ENCODE measurements at regions of chrX and their contacts with region 1.

Region 1: GRCh38 chrX:154490414-154491083 is at the start of gene SLC10A3:
- DNase-seq: peak; percentile 92
- H3K4me3 Mint-ChIP-seq: peak within 1 kb of the TSS; percentile 86
- H3K27ac Mint-ChIP-seq: peak within 1 kb of the TSS; percentile 88
- H3K4me1 Mint-ChIP-seq: peaks cover 20% of the 10 kb centered on the region
- H3K27me3 Mint-ChIP-seq: no peaks in the 10 kb centered on the region
- total RNA-seq, gene SLC10A3: 6.7 to 6.9 TPM

Region 2: DNA sequence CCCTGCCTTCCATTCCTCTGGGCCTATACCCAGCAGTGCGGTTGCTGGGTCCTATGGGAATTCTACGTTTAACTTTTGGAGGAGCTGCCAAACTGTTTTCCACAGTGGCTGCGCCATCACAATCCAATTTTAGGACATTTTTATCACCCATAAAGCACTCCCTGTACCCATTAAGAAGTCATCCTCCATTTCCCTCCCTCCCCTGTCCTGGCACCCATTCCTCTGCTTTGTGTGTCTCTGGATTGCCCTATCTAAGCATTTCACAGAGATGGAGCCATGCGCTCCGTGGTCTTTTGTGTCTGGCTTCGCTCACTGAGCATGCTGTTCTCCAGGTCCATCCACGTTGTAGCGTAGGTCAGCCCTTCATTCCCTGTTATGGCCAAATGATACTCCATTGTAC is 348.2 kb before region 1 on chrX:
- CTCF ChIA-PET with region 1: no interaction called
- intact Hi-C with region 1: no loop called
- DNase-seq: no peak
- H3K4me3 Mint-ChIP-seq: no peak overlapping the region
- H3K27ac Mint-ChIP-seq: no peak overlapping the region
- H3K4me1 Mint-ChIP-seq: no peaks in the 10 kb centered on the region
- H3K27me3 Mint-ChIP-seq: no peaks in the 10 kb centered on the region

Region 3: GRCh38 chrX:154317391-154317995 is 173.1 kb before region 1 on chrX:
- CTCF ChIA-PET with region 1: no interaction called
- intact Hi-C with region 1: no loop called
- DNase-seq: no peak
- H3K4me3 Mint-ChIP-seq: no peak overlapping the region
- H3K27ac Mint-ChIP-seq: no peak overlapping the region
- H3K4me1 Mint-ChIP-seq: peaks cover 48% of the 10 kb centered on the region
- H3K27me3 Mint-ChIP-seq: no peaks in the 10 kb centered on the region

Region 4: DNA sequence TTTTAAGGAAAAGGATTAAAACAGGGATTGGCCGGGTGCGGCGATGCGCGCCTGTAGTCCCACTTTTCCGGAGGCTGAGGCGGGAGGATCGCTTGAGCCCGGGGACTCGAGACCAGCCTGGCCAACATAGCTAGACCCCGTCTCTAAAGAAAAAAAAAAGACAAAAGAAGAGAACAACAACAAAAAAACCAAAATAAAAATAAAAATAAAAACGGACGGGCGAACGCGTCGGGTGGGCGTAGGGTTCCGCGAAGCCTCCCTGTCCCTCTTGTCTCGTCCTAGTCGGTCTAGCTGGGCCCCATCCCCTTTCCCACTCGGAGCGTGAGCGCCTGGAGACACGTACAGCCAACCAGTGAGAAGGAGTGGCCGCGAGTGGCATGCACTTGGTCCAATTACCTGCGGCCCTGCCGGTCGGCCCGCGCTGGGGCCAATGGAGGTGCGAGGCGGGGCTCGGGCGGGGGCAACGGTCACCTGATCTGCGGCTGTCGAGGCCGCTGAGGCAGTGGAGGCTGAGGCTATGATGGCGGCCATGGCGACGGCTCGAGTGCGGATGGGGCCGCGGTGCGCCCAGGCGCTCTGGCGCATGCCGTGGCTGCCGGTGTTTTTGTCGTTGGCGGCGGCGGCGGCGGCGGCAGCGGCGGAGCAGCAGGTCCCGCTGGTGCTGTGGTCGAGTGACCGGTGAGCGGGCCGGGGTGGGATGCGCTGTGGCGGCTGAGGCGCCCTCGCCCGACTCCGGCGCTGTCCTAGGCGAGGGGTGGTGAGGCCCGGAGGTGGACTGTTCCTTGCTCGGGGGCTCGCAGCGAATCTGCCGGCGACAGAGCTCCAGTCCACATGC is 62.2 kb before region 1 on chrX and contains the start of gene ATP6AP1:
- CTCF ChIA-PET with region 1: no interaction called
- intact Hi-C with region 1: loop called (anchors 1 kb)
- DNase-seq: peak; percentile 94
- H3K4me3 Mint-ChIP-seq: peak within 1 kb of the TSS; percentile 74
- H3K27ac Mint-ChIP-seq: peak within 1 kb of the TSS; percentile 63
- H3K4me1 Mint-ChIP-seq: peaks cover 24% of the 10 kb centered on the region
- H3K27me3 Mint-ChIP-seq: no peaks in the 10 kb centered on the region
- total RNA-seq, gene ATP6AP1: 20.3 to 21.1 TPM

Region 5: GRCh38 chrX:154436983-154437719 is 53.4 kb before region 1 on chrX and contains the start of gene GDI1:
- CTCF ChIA-PET with region 1: no interaction called
- intact Hi-C with region 1: loop called (anchors 2 kb)
- DNase-seq: peak; percentile 45
- H3K4me3 Mint-ChIP-seq: peak within 1 kb of the TSS; percentile 84
- H3K27ac Mint-ChIP-seq: peak within 1 kb of the TSS; percentile 82
- H3K4me1 Mint-ChIP-seq: peaks cover 22% of the 10 kb centered on the region
- H3K27me3 Mint-ChIP-seq: no peaks in the 10 kb centered on the region
- total RNA-seq, gene GDI1: 93.6 to 96.9 TPM

Region 6: DNA sequence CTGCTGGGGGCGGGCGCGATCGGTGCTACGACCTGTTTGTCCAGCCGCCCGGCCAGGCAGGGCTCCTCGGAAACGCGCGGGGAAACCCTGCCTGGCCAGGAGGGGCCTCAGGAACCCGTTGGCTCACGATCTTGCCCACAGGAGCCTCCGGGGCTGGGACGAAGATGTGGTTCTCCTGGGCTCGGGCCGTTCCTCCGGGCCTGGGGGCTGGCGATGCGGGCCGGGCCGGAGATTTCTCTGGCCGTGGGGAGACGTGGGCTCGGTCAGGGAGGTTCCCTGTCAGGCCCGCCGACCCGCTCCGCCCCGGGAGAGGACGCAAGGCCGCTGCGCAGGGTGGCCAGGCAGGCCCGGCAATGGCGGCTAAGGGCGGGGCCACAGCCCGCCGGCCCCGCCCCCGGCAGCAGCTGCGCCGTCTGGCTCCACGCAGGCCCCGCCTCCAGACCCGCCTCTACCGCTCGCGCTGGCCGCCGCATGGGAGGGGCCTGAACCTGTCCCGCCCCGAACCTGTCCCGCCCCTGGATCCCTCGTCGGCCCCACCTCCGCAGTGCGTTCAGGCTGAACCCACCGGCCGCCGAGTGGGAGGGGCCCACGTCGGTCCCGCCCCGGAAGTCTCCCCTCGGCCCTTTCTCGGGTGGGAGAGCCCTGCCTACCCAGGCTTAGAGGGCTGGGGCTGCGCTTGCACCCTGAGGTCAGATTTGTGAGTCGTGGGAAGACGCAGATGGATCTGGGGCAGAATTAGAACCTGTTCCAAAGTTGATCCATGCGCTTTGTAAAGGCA is 25.5 kb after region 1 on chrX and contains the start of gene FAM3A:
- CTCF ChIA-PET with region 1: no interaction called
- intact Hi-C with region 1: loop called (anchors 1 kb)
- DNase-seq: peak; percentile 95
- H3K4me3 Mint-ChIP-seq: peak within 1 kb of the TSS; percentile 83
- H3K27ac Mint-ChIP-seq: peak within 1 kb of the TSS; percentile 79
- H3K4me1 Mint-ChIP-seq: peaks cover 23% of the 10 kb centered on the region
- H3K27me3 Mint-ChIP-seq: no peaks in the 10 kb centered on the region
- total RNA-seq, gene FAM3A: 17.8 to 21.4 TPM